ENCODE measurements at regions of chr1 and their contacts with region 1.

Region 1: GRCh38 chr1:112849425-112850033 is 106.5 kb downstream of the SLC16A1 start:
- DNase-seq: peak; percentile 77 to 79
- H3K4me3 ChIP-seq: peak overlapping the region; percentile 81
- H3K4me3 Mint-ChIP-seq: peak overlapping the region; percentile 78
- H3K27ac Mint-ChIP-seq: peak overlapping the region; percentile 99
- H3K4me1 ChIP-seq: peaks cover 25% of the 10 kb centered on the region
- H3K4me1 Mint-ChIP-seq: peaks cover 7% of the 10 kb centered on the region
- H3K27me3 ChIP-seq: no peaks in the 10 kb centered on the region
- H3K27me3 Mint-ChIP-seq: no peaks in the 10 kb centered on the region
- CTCF ChIP-seq: no peak

Region 2: GRCh38 chr1:112866151-112866550 is 16.6 kb after region 1 on chr1:
- CTCF ChIA-PET with region 1: interaction called, 3 read pairs
- POLR2A ChIA-PET with region 1: interaction called, 4 read pairs
- intact Hi-C with region 1: loop called (anchors 2 kb)
- DNase-seq: peak; percentile 52 to 71
- H3K4me3 ChIP-seq: no peak overlapping the region
- H3K4me3 Mint-ChIP-seq: peak overlapping the region; percentile 44
- H3K27ac Mint-ChIP-seq: peak overlapping the region; percentile 92
- H3K4me1 ChIP-seq: peaks cover 57% of the 10 kb centered on the region
- H3K4me1 Mint-ChIP-seq: peaks cover 43% of the 10 kb centered on the region
- H3K27me3 ChIP-seq: no peaks in the 10 kb centered on the region
- H3K27me3 Mint-ChIP-seq: no peaks in the 10 kb centered on the region
- CTCF ChIP-seq: no peak